ENCODE measurements at regions of chr4 and their contacts with region 1.

Region 1: GRCh38 chr4:25312496-25313200 is at the start of gene ZCCHC4:
- DNase-seq: peak; percentile 88
- H3K4me3 Mint-ChIP-seq: peak within 1 kb of the TSS; percentile 99
- H3K27ac Mint-ChIP-seq: peak within 1 kb of the TSS; percentile 89
- H3K4me1 Mint-ChIP-seq: peaks cover 22% of the 10 kb centered on the region
- H3K27me3 Mint-ChIP-seq: peaks cover 8% of the 10 kb centered on the region
- total RNA-seq, gene ZCCHC4: 10.5 to 11.9 TPM

Region 2: DNA sequence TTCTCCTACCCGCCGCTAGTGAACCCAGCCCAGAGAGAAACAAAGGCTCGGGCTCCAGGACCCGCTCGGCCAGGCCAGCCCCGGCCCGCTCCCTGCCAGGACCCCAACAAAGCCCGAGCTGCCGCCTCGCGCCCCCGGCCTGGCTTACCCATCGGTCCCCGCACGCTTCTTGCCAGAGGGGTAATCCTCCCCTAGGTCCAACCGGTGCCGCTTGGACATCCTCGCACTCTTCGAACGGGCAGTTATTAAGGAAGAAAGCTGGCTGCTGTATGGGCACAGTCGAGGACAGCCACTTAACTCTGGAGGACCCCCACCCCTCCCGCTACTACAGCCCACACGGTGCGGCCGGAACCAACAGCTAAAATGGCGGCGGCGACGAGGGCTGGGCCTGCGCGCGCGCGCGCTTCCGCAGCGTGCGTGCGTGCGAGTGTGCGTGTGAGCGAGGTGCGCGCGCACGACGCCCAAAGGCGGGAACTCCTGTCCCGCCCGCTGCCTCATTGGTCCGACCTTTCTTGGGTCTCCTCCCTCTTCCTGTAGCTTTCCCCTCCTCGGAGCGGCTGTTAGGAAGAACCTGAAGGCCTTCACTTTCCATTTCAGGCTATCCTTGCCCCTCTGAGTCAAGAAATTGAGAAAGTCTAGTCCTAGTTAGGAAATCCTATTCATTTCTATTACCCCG is 728.3 kb before region 1 on chr4 and contains the start of gene DHX15:
- CTCF ChIA-PET with region 1: no interaction called
- intact Hi-C with region 1: loop called (anchors 1 kb)
- DNase-seq: peak; percentile 94
- H3K4me3 Mint-ChIP-seq: peak within 1 kb of the TSS; percentile 95
- H3K27ac Mint-ChIP-seq: peak within 1 kb of the TSS; percentile 96
- H3K4me1 Mint-ChIP-seq: peaks cover 37% of the 10 kb centered on the region
- H3K27me3 Mint-ChIP-seq: no peaks in the 10 kb centered on the region
- total RNA-seq, gene DHX15: 197 to 199 TPM

Region 3: GRCh38 chr4:25180524-25181131 is 132.0 kb before region 1 on chr4:
- CTCF ChIA-PET with region 1: interaction called, 12 read pairs
- intact Hi-C with region 1: loop called (anchors 1 kb)
- DNase-seq: peak; percentile 50
- H3K4me3 Mint-ChIP-seq: no peak overlapping the region
- H3K27ac Mint-ChIP-seq: no peak overlapping the region
- H3K4me1 Mint-ChIP-seq: peaks cover 32% of the 10 kb centered on the region
- H3K27me3 Mint-ChIP-seq: no peaks in the 10 kb centered on the region

Region 4: DNA sequence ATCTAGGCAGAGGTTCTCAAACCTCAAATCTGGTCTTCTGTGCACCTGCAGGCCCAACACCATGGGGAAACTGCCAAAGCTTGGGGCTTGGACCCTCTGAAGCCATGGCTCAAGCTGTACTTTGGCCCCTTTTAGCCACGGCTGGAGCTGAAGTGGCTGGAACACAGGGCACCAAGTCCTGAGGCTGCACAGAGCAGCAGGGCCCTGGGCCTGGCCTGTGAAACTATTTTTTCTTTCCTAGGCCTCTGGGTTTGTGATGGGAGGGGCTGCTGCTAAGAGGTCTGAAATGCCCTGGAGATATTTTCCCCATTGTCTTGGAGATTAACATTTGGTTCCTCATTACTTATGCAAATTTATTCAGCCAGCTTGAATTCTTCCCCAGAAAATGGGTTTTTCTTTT is 97.1 kb before region 1 on chr4:
- CTCF ChIA-PET with region 1: no interaction called
- intact Hi-C with region 1: no loop called
- DNase-seq: no peak
- H3K4me3 Mint-ChIP-seq: no peak overlapping the region
- H3K27ac Mint-ChIP-seq: no peak overlapping the region
- H3K4me1 Mint-ChIP-seq: no peaks in the 10 kb centered on the region
- H3K27me3 Mint-ChIP-seq: no peaks in the 10 kb centered on the region

Region 5: DNA sequence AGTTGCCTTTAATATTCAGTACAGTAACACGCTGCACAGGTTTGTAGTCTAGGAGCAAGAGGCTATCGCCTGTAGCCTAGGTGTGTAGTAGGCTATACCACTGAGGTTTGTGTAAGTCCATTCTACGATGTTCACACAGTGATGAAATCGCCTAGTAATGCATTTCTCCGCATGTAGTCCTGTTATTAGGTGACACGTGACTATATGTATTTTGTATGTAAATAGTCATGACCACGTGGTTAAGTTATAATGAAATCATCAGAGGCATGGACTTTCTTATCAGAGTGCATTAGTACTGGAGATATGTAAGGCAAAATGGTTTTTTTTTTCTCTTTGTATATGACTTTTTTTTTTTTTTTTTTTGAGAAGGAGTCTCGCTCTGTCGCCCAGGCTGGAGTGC is 10.0 kb before region 1 on chr4:
- CTCF ChIA-PET with region 1: interaction called, 14 read pairs
- intact Hi-C with region 1: no loop called
- DNase-seq: no peak
- H3K4me3 Mint-ChIP-seq: no peak overlapping the region
- H3K27ac Mint-ChIP-seq: no peak overlapping the region
- H3K4me1 Mint-ChIP-seq: no peaks in the 10 kb centered on the region
- H3K27me3 Mint-ChIP-seq: peaks cover 7% of the 10 kb centered on the region

Region 6: DNA sequence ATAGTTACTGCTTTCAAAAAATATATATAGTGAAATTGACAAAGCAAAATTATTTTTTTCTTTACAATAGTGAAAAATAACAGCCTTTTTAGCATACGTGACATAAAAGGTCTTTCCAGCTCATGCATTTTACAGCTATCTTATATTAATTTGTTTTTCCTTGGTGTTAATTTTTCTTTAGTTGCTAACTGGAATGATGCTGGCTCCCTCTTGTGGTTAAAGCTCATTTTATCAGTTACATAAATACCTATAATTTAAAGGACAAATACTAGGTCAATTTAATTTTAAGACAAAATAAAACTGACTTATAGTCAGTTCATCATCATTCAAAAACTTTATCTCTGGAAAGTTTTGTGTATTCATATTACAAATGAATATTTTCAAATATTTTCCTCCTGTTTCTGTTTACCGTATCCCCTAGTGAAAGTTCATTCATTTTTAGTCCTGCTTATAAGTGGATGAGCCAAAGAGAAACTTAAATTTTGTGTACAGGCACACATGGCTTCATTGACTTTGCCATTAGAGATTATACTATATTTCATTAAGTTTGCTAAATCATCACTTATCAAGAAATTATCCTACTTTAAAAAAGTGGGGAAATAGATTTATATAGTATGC is 54.5 kb after region 1 on chr4:
- CTCF ChIA-PET with region 1: interaction called, 30 read pairs
- intact Hi-C with region 1: loop called (anchors 1 kb)
- DNase-seq: peak; percentile 12
- H3K4me3 Mint-ChIP-seq: no peak overlapping the region
- H3K27ac Mint-ChIP-seq: no peak overlapping the region
- H3K4me1 Mint-ChIP-seq: no peaks in the 10 kb centered on the region
- H3K27me3 Mint-ChIP-seq: no peaks in the 10 kb centered on the region

Region 7: DNA sequence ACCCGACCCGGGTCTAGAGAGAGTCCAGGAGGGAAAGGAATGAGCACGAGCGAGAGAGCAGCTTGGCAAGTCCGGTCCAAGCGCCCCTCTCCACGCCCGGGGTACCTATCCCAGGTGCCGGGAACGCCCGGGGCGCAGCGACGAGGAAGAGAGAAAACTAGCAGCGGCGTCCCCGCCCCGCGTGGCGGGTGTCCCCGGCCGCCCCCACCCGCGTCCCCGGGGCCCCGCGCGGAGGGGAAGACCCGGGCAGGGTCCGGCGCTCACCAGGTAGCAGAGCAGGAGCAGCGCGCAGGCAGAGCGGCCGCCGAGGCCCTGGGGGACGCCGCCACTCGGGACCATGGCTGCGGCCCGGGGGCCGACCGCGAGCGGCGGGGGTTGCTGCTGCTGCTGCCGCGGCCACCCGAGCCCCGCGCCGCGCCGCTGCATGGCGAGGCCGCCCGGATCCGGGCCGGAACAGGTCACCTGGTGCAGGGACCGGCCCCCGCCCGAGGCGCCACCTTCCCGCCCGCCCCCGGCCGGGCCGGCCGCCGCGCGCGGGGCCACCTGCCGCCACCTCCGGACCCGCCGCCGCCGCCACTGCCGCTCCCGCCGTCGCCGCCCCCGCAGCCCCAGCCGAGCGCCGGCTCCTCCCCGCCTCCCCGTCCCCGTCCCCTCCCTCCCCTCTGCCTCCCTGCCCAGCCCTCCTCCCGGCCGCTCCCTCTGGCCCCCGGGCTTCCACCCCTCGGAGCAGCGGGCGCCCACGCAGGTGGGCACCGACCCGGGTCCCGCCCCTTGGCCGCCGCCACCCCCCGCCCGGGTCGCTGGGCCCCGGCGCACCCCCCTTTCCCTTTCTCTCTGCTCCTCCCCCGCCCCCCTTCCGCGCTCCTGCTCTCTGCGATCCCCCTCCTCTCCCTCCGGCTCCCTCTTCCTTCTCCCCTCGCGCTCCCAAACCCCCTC is 550.0 kb after region 1 on chr4 and contains the start of gene SEL1L3:
- CTCF ChIA-PET with region 1: interaction called, 6 read pairs
- intact Hi-C with region 1: loop called (anchors 5 kb)
- DNase-seq: peak; percentile 53
- H3K4me3 Mint-ChIP-seq: peak within 1 kb of the TSS; percentile 93
- H3K27ac Mint-ChIP-seq: peak within 1 kb of the TSS; percentile 92
- H3K4me1 Mint-ChIP-seq: peaks cover 33% of the 10 kb centered on the region
- H3K27me3 Mint-ChIP-seq: no peaks in the 10 kb centered on the region
- total RNA-seq, gene SEL1L3: 32.3 to 38.2 TPM